SK-N-SH (cell line): ENCODE measurements at regions of chr16 and their contacts with region 1.

Region 1: GRCh38 chr16:56281256-56281805 is 90.0 kb downstream of the GNAO1 start:
- DNase-seq: peak; percentile 58
- H3K4me3 ChIP-seq: no peak overlapping the region
- H3K27ac ChIP-seq: no peak overlapping the region
- H3K4me1 ChIP-seq: peaks cover 0 to 27% of the 10 kb centered on the region in 2 experiments; a peak in 1 of 4 replicates
- H3K27me3 ChIP-seq: no peaks in the 10 kb centered on the region
- CTCF ChIP-seq: peak; percentile 34; the same call in 1 of the 2 replicates
- EP300 ChIP-seq: no peak
- RAD21 ChIP-seq: peak; percentile 50

Region 2: DNA sequence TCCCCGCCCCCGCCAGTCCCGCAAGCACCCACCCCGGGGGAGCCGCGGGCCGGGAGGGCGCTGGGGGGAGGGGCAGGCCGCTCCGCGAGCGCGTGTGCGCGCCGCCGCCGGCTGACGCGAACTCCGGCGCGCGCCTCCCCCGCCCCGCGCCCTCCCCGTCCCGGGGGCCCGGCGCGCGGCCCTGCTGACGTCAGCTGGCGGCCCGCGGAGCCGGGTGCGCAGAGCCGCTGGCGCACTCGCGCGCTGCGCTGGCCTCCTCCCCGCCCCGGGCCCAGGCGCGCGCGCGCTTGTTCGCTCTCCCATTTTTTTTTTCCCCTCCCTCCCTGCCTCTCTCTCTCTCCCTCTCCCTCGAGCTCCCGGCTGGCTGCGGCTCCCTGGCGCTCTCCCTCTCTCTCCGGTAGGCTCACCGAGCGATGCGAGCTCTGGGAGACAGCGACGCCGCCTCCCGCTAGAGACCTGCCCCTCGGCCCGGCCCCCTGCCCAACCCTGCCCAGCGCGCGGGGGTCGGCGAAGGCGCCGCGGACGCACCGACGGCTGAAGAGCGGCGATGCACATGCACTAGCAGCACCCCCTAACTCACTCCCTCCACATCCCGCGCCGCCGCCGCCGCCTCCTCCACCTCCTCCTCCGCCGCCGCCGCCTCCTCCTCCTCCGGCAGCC is 90.0 kb before region 1 on chr16 and contains the start of gene GNAO1:
- CTCF ChIA-PET with region 1: interaction called, 11 read pairs
- POLR2A ChIA-PET with region 1: no interaction called
- DNase-seq: peak; percentile 94
- H3K4me3 ChIP-seq: peak within 1 kb of the TSS; percentile 53 to 55
- H3K27ac ChIP-seq: peak within 1 kb of the TSS in 1 of 2 experiments; percentile 93; a peak in 2 of 4 replicates
- H3K4me1 ChIP-seq: peaks cover 0 to 8% of the 10 kb centered on the region in 2 experiments; a peak in 2 of 4 replicates
- H3K27me3 ChIP-seq: peaks cover 46% of the 10 kb centered on the region
- CTCF ChIP-seq: no peak
- EP300 ChIP-seq: no peak
- RAD21 ChIP-seq: peak; percentile 19; the same call in 1 of the 2 replicates
- polyA plus RNA-seq, gene GNAO1: 0.15 and 0.30 TPM in 2 replicates

Region 3: DNA sequence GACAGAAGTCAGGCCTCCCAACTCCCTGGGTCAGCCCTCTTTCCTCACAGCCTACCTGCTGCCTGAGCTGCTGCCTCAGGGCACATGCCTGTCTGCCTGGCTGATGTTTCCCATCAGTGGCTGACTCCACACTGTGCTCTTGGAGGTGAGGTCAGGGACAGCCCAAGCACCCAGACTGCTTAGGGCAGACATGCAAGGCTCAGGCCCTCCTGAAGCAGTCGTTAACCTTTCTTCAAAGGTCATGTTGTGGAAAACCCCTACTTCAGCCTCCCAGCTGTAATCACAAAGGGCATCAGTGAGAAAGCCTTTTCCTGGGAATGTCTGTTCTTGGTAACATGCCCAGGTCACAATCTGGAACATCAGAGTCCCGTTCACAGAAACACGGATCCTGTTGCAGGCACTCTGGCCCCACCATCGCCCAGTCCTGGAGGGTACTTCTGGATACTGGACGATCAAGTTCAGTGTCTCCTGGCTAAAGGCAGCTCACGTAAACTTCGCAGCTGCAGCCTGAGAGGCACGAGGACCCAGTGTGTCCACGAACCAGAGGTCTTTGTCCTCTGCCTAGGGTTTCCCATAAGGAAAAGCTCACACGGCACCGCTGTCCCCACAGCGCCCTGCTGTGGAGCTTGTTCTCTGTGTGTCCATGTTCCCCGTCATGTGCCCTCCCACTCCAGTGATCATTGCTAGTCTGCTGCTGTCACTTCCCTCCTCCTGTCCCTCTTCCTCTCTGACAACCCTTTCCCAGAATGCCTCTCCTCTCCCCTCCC is 35.1 kb before region 1 on chr16:
- CTCF ChIA-PET with region 1: interaction called, 10 read pairs
- POLR2A ChIA-PET with region 1: no interaction called
- DNase-seq: peak; percentile 56
- H3K4me3 ChIP-seq: no peak overlapping the region
- H3K27ac ChIP-seq: peak overlapping the region in 1 of 2 experiments; percentile 92; a peak in 2 of 4 replicates
- H3K4me1 ChIP-seq: peaks cover 0 to 34% of the 10 kb centered on the region in 2 experiments; a peak in 1 of 4 replicates
- H3K27me3 ChIP-seq: no peaks in the 10 kb centered on the region
- CTCF ChIP-seq: no peak
- EP300 ChIP-seq: peak in 1 of 2 experiments; percentile 36; a peak in 1 of 4 replicates
- RAD21 ChIP-seq: peak; percentile 50

Region 4: DNA sequence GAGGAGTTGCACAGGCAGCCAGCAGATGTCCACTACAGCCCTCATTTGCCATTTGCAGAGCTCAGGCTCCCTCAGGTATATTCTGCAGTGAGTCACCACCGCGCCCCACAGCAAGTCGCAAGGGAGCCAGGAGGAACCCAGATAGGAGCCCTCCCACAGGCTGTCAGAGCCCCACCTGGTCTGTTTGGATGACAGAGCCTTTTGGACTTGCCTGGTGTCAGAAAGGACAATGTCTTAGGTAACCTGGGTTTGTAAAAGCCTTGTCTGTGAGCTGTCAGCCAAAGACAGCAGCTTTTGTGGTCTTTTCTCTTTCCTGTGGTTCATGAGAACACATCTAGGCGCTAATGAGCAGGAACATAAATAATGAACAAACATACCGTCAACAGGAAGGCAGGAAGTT is 19.2 kb before region 1 on chr16:
- CTCF ChIA-PET with region 1: interaction called, 21 read pairs
- POLR2A ChIA-PET with region 1: interaction called, 8 read pairs
- DNase-seq: no peak
- H3K4me3 ChIP-seq: no peak overlapping the region
- H3K27ac ChIP-seq: peak overlapping the region in 1 of 2 experiments; percentile 93; a peak in 2 of 4 replicates
- H3K4me1 ChIP-seq: peaks cover 0 to 89% of the 10 kb centered on the region in 2 experiments; a peak in 2 of 4 replicates
- H3K27me3 ChIP-seq: 0 out of 2 replicates have a peak, but pooled peaks cover 11% of the 10 kb centered on the region
- CTCF ChIP-seq: no peak
- EP300 ChIP-seq: no peak
- RAD21 ChIP-seq: no peak

Region 5: DNA sequence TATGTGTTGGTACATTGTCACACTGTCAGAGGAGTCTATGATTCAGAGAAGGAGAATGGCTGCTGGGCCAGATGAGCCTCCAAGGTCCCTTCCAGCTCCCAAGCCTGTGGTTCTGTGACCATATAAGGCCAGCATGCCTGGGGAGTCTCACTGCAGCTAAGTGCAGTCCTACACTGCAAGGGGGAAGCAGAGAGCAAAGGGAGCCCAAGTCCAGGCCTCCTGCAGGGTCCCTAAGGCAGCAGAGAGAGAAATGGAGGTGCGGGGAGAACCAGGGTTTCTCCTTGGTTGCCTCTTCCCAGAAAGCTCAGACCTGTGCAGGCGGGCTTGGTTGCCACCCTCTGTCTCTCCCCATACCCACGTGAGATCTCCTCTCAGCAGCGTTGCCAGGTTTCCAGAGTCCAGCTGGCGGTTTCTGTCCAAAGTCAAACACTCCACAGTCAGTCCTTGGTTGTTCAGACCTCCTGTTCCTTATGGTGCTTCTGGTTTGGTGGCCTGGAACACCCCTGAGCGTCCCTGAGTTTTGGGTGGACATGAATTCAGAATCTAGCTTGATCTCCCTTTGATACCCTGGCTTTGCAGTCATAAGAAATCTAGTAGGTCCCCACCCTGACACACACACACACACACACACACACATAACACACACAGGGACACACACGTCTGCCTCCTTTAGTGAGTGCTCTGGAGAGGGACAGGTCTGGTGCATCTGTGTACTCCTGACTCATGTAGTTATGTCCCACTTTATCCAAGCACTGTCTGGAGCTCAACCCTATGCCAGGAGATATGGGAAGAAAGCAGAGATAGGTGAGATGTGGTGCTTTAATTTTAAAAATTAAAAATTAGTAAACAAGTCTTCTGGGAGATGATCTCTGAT is 11.3 kb before region 1 on chr16:
- CTCF ChIA-PET with region 1: interaction called, 21 read pairs
- POLR2A ChIA-PET with region 1: no interaction called
- DNase-seq: no peak
- H3K4me3 ChIP-seq: no peak overlapping the region
- H3K27ac ChIP-seq: peak overlapping the region in 1 of 2 experiments; percentile 51; a peak in 1 of 4 replicates
- H3K4me1 ChIP-seq: peaks cover 0 to 42% of the 10 kb centered on the region in 2 experiments; a peak in 1 of 4 replicates
- H3K27me3 ChIP-seq: no peaks in the 10 kb centered on the region
- CTCF ChIP-seq: no peak
- EP300 ChIP-seq: no peak
- RAD21 ChIP-seq: peak; percentile 12; the same call in 1 of the 2 replicates

Region 6: DNA sequence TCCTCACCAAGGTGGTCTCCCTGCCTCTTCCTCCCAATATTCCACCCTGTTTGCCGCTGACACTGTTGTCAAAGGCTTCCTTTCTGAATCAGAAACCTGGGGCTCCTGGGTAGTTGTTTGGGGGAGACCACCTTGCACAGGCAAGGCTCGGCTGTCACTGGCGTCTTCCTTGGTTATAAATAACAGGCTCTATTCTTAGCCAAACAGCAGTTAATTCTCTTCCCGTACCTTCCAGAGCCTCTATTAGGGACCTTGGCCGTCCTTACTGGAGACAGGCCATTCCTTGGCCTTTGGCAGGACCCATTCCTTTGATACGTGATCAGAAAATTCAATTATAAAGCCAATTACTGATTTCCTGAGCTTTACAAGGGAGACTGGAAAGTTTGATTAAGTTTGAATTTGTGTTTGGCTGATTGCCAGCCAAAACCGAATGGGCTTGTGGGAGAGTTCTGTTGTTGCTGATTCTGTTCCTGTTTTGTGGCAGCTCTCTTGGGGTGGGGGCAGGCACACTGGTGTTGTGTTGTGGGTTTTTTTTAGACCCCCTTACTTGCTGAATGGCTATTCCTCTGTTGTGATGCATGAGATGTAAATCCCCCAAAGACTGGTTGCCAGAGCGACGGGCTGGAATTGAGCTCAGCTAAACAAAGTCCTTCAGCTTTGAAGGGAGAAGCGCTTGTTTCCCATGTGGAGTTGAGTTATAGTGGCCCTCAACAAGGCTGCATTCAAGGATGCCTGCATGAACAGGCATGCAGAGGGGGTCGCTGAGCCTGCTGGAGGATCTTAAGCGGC is 14.6 kb after region 1 on chr16:
- CTCF ChIA-PET with region 1: interaction called, 17 read pairs
- POLR2A ChIA-PET with region 1: no interaction called
- DNase-seq: peak; percentile 58
- H3K4me3 ChIP-seq: no peak overlapping the region
- H3K27ac ChIP-seq: peak overlapping the region in 1 of 2 experiments; percentile 68; a peak in 2 of 4 replicates
- H3K4me1 ChIP-seq: peaks cover 0 to 48% of the 10 kb centered on the region in 2 experiments; a peak in 2 of 4 replicates
- H3K27me3 ChIP-seq: no peaks in the 10 kb centered on the region; the same call in 1 of the 2 replicates
- CTCF ChIP-seq: no peak
- EP300 ChIP-seq: peak in 1 of 2 experiments; percentile 62; a peak in 1 of 4 replicates
- RAD21 ChIP-seq: no peak